CD4-positive, alpha-beta T cell (primary cell): ENCODE measurements at regions of chr11 and their contacts with region 1.

Region 1: DNA sequence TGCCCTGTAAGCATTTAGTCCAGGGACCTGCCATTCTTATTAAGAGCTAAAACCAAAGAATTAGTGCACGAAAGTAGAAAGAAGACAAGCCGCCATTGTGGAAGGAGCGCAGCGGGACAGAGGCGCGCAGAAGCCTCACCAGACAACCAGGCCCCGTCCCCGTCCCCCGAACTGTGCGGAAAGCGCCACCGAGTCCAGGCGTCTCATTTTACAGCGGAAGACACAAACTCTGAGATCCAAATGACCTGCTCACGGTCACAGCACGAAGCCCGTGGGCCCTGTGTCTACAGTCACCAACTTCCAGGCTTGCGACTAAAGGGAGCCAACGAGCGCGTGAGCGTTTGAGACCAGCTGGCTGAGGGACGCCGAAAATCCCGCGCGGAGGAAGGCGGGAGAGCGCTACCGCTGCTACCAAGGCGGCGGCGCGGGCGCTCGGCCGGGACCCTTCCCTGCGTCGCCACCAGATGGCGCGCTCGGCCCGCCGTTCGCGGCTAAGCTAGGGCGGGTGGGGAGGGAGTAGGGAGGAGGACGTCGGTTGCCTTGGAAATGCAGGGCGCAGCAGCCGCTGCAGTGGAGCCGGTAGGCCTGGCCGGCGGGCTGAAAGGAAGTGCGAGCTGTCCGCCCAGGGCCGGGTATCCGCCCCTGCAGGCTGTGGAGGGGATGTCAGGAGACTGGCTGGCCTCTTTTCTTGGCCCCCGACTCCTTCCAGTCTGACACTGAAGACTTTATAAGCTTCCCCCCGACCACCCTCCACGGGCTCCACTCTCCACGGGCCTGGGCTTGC is 434 bp upstream of the CCDC83 start:
- DNase-seq: peak; percentile 76 to 96 (median 89)
- ATAC-seq: peak; percentile 97
- H3K4me3 ChIP-seq: peak overlapping the region; percentile 70
- H3K4me3 Mint-ChIP-seq: peak overlapping the region; percentile 91
- H3K27ac ChIP-seq: peak overlapping the region; percentile 68 to 75
- H3K27ac Mint-ChIP-seq: peak overlapping the region; percentile 93
- H3K4me1 ChIP-seq: peaks cover 12% of the 10 kb centered on the region
- H3K4me1 Mint-ChIP-seq: peaks cover 13% of the 10 kb centered on the region
- H3K27me3 ChIP-seq: no peaks in the 10 kb centered on the region
- H3K27me3 Mint-ChIP-seq: no peaks in the 10 kb centered on the region
- CTCF ChIP-seq: peak; percentile 87

Region 2: DNA sequence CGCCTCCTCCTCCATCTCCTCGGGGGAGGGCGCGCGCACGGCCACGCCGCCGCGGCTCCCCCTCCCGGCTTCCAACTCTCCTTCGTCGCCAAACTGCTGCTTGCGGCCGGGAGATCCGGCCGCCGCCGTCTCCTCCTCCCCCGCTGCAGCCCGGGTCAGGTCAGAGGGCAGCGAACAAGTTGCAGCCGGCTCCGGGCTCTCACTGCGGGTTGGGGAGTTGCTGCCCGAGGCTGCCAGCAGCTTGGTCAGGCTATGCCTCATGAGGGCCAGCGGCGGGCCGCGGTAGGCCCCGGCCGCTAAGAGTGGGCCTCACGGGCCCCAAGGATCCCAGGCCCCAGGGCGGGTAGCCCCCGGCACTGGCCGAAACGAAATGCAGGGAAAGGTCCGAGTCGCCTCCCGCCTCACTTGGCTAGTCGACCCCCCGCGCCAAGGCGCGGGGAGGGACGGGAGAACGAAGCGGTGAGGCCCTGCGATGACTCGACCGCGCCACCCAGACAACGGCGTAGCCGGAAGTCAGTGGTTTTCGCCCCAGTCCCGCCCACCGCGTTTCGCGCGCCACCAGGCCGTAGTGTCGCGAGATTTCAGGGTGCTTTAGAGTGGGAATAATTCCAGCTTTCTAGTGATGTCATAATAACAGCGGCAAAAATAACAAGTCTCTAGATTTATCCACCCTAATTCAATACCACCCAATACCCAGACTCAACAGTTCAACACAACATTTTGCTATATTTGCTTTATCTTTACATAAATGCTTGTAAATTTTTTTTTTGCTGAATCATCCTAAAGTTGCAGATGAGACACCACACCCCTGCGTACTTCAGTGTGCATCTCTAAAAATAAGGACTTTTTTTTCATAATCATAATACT is 189.9 kb before region 1 on chr11 and contains the start of gene CREBZF:
- CTCF ChIA-PET with region 1: interaction called, 13 read pairs
- POLR2A ChIA-PET with region 1: interaction called, 5 read pairs
- intact Hi-C with region 1: no loop called
- DNase-seq: peak; percentile 86 to 95 (median 90)
- ATAC-seq: peak; percentile 62
- H3K4me3 ChIP-seq: peak within 1 kb of the TSS; percentile 94
- H3K4me3 Mint-ChIP-seq: peak within 1 kb of the TSS; percentile 100
- H3K27ac ChIP-seq: peak within 1 kb of the TSS; percentile 97 to 99
- H3K27ac Mint-ChIP-seq: peak within 1 kb of the TSS; percentile 100
- H3K4me1 ChIP-seq: peaks cover 14% of the 10 kb centered on the region
- H3K4me1 Mint-ChIP-seq: peaks cover 58% of the 10 kb centered on the region
- H3K27me3 ChIP-seq: no peaks in the 10 kb centered on the region
- H3K27me3 Mint-ChIP-seq: no peaks in the 10 kb centered on the region
- CTCF ChIP-seq: no peak
- total RNA-seq, gene CREBZF: 54.8 to 55.9 TPM

Region 3: DNA sequence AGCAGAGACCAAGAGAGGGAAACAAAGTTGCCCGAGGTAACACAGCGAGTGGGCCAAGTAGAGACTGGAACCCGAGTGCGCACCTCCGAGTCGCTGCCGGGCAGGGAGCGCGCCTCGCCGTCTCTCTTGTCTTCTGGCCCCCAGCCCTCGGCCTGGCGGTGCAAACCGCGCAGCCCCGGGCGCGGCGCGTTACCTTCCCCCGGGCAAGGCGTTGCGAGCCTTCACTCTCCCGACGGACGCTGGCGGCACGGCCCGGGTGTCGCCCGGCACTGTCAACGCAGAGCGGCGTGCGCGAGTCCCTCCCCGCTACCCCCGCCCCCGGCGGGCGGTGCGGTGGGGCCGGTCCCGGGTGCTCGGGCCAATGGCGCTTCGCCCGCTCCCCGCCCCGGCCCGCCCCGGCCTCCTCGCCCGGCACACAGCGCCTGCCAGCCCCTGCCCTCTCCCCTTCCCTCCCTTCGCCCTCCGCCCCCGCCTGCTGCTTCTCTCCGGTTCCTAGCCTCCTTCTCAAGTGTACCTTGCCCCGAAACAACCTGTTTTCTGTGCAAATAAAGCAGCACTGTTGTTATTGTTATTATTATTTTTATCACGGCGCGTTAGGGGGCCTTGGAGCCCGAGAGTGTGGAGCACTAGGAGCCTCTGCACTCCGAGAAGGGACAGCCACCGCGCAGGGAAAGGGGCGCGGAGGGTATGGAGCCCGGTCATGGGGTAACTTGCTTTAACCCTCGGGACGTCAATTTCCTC is 43.7 kb before region 1 on chr11 and contains the start of gene SYTL2:
- CTCF ChIA-PET with region 1: interaction called, 21 read pairs
- POLR2A ChIA-PET with region 1: interaction called, 10 read pairs
- intact Hi-C with region 1: no loop called
- DNase-seq: peak; percentile 46 to 91 (median 69)
- ATAC-seq: peak; percentile 80
- H3K4me3 ChIP-seq: peak within 1 kb of the TSS; percentile 68
- H3K4me3 Mint-ChIP-seq: peak within 1 kb of the TSS; percentile 96
- H3K27ac ChIP-seq: peak within 1 kb of the TSS in 1 of 2 donors; percentile 43
- H3K27ac Mint-ChIP-seq: peak within 1 kb of the TSS; percentile 89
- H3K4me1 ChIP-seq: peaks cover 37% of the 10 kb centered on the region
- H3K4me1 Mint-ChIP-seq: peaks cover 48% of the 10 kb centered on the region
- H3K27me3 ChIP-seq: no peaks in the 10 kb centered on the region
- H3K27me3 Mint-ChIP-seq: no peaks in the 10 kb centered on the region
- CTCF ChIP-seq: no peak
- total RNA-seq, gene SYTL2: 35.4 to 36.7 TPM

Region 4: GRCh38 chr11:86003654-86004053 is 148.9 kb after region 1 on chr11:
- CTCF ChIA-PET with region 1: no interaction called
- POLR2A ChIA-PET with region 1: no interaction called
- intact Hi-C with region 1: loop called (anchors 10 kb)
- DNase-seq: no peak
- ATAC-seq: no peak
- H3K4me3 ChIP-seq: no peak overlapping the region
- H3K4me3 Mint-ChIP-seq: no peak overlapping the region
- H3K27ac ChIP-seq: no peak overlapping the region
- H3K27ac Mint-ChIP-seq: no peak overlapping the region
- H3K4me1 ChIP-seq: no peaks in the 10 kb centered on the region
- H3K4me1 Mint-ChIP-seq: no peaks in the 10 kb centered on the region
- H3K27me3 ChIP-seq: no peaks in the 10 kb centered on the region
- H3K27me3 Mint-ChIP-seq: no peaks in the 10 kb centered on the region
- CTCF ChIP-seq: no peak

Region 5: DNA sequence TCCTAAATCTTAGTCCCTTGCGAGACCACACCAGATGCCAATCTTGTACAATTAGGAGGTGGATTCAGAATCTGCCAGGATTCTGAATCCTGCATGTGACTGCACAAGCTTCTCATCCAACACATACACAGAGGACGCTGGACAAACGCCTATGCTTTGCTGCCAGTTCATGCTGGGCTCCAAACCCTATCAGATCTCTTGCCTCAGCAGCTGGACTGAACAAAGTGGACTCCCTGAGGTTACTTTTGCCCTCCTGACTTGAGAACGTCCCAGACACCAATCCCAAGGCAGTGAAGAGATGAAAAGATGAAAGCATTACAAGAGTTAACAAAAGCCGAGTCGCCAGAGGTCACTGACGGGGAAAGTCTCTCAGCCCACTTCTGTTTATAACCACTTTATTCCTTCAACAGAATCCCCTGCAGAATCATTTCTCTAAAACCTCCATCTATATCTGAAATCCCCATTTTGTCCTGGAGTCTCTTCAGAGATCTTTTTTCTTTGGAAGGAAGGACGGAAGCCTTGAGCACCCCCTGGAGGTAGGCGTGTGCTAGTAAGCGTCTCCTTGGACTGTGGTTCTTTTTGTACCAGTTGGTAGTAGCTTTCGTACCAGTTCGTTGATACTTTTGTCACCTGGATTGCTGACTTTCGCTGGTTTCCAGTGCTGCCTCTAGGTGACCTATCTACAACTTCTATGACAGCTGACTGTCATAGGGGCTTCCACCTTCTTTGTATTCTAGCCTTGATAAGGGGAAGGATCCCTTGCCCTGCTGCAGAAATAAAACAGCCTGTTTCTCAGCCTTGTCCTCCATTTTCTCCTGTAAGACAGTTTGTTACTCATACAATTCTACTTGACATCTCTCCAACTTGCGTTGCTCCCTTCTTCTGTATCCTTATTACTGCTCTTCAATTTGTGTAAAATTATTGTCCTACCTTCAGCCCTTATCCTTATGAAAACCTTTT is 363.7 kb after region 1 on chr11:
- CTCF ChIA-PET with region 1: interaction called, 3 read pairs
- POLR2A ChIA-PET with region 1: no interaction called
- intact Hi-C with region 1: loop called in 1 of 2 experiments (anchors 1 kb)
- DNase-seq: peak; percentile 26 to 82 (median 43)
- ATAC-seq: peak; percentile 95
- H3K4me3 ChIP-seq: peak overlapping the region; percentile 21
- H3K4me3 Mint-ChIP-seq: peak overlapping the region; percentile 66
- H3K27ac ChIP-seq: no peak overlapping the region
- H3K27ac Mint-ChIP-seq: no peak overlapping the region
- H3K4me1 ChIP-seq: peaks cover 8% of the 10 kb centered on the region
- H3K4me1 Mint-ChIP-seq: peaks cover 11% of the 10 kb centered on the region
- H3K27me3 ChIP-seq: no peaks in the 10 kb centered on the region
- H3K27me3 Mint-ChIP-seq: peaks cover 31% of the 10 kb centered on the region
- CTCF ChIP-seq: peak; percentile 87